ENCODE measurements at regions of chr10 and their contacts with region 1.

Region 1: DNA sequence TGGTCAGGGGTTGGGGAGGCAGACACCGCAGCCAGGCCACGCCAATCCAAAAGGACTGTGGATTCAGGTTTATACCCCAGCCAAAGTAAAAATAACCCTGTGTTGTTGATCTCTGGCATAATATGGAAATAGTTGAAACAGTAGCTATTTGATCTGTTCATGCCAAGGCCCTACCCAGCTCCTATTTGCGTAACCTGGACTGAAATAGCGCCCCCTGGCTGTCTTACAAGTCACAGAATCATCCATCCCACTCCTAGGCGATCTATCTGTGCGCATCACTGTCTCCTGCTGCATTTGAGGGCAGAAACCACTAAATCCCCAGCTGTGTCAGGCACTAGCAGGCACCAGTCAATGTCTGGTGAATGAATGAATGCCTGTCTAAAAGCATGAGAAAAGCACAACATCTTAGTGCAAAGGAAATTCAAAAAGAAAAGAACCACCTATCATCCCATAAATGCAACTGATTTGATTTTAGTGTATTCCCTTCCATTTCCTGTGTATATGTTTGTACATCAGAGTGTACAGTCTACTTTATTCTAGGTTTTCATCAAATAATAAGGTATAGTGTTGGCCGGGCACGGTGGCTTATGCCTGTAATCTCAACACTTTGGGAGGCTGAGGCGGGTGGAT is 160.0 kb downstream of the SLIT1 start:
- DNase-seq: peak; percentile 61
- H3K4me3 Mint-ChIP-seq: no peak overlapping the region
- H3K27ac Mint-ChIP-seq: no peak overlapping the region
- H3K4me1 Mint-ChIP-seq: peaks cover 6% of the 10 kb centered on the region
- H3K27me3 Mint-ChIP-seq: peaks cover 14% of the 10 kb centered on the region

Region 2: GRCh38 chr10:96639899-96640298 is 385.8 kb before region 1 on chr10:
- CTCF ChIA-PET with region 1: interaction called, 14 read pairs
- POLR2A ChIA-PET with region 1: no interaction called
- DNase-seq: no peak
- H3K4me3 Mint-ChIP-seq: no peak overlapping the region
- H3K27ac Mint-ChIP-seq: no peak overlapping the region
- H3K4me1 Mint-ChIP-seq: peaks cover 2% of the 10 kb centered on the region
- H3K27me3 Mint-ChIP-seq: no peaks in the 10 kb centered on the region

Region 3: DNA sequence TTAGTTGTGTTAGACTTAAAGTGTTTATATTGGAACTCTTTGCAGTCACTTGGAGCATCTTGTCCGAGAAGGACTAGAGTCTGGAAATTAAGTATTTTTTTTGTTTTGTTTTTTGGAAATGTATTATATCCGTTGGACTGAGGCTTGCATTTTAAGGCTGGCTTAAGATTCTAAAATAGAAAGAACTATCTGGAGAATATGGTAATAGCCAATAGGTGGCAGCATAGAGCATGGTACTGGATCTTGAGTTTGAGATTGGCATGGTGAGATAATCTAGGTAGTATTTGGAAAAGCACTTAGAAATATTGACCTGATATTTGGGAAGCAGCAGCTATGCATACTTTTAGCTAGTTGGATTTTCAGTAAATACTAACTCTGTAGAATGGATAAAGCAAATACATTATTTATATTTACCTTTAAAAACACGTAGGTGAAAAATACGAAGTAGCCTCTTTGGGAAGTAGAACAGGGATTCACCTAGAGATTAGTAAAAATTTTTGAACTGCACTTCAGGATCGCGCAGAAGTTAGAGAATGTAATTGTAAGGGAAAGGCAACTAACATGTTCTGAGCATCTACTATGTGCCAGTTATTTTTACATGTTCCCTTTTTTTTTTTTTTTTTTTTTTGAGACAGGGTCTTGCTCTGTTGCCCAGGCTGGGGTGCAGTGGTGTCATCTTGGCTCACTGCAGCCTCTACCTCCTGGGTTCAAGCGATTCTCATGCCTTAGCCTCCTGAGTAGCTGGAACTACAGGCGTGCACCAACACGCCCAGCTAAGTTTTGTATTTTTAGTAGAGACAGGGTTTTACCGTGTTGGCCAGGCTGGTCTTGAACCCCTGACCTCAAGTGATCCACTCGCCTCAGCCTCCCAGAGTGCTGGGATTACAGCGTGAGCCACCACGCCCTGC is 115.0 kb before region 1 on chr10:
- CTCF ChIA-PET with region 1: interaction called, 35 read pairs
- POLR2A ChIA-PET with region 1: no interaction called
- DNase-seq: no peak
- H3K4me3 Mint-ChIP-seq: no peak overlapping the region
- H3K27ac Mint-ChIP-seq: no peak overlapping the region
- H3K4me1 Mint-ChIP-seq: peaks cover 5% of the 10 kb centered on the region
- H3K27me3 Mint-ChIP-seq: no peaks in the 10 kb centered on the region

Region 4: DNA sequence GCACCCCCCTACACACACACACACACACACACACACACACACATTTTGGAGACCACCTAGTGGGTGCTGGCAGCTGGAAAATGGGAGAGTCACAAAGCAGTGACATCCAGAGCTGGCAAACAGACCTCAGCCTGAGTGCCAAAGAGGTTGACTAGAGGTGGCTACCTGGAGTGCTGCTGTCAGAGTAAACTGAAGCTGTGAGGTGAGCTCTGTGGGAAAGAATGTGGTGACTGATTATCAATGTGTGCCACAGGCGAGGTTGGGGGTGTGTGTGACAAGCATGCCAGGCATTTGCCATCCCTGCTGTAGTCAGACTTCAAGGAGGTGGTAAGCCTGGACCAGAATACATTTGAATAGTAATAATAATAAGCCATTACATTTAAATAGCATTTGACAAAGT is 39.4 kb after region 1 on chr10:
- CTCF ChIA-PET with region 1: no interaction called
- POLR2A ChIA-PET with region 1: no interaction called
- DNase-seq: no peak
- H3K4me3 Mint-ChIP-seq: no peak overlapping the region
- H3K27ac Mint-ChIP-seq: no peak overlapping the region
- H3K4me1 Mint-ChIP-seq: peaks cover 11% of the 10 kb centered on the region
- H3K27me3 Mint-ChIP-seq: peaks cover 2% of the 10 kb centered on the region

Region 5: GRCh38 chr10:97101166-97101940 is 75.6 kb after region 1 on chr10:
- CTCF ChIA-PET with region 1: no interaction called
- POLR2A ChIA-PET with region 1: no interaction called
- DNase-seq: no peak
- H3K4me3 Mint-ChIP-seq: no peak overlapping the region
- H3K27ac Mint-ChIP-seq: no peak overlapping the region
- H3K4me1 Mint-ChIP-seq: peaks cover 4% of the 10 kb centered on the region
- H3K27me3 Mint-ChIP-seq: peaks cover 3% of the 10 kb centered on the region

Measured in activated CD4-positive, alpha-beta memory T cell treated with anti-CD3 and anti-CD28 coated beads, Interleukin-2, amount 10 ng/mL, durations not matched to agents 7 days and 5 days (primary cell).